PC-3 (cell line): ENCODE measurements at regions of chrX and their contacts with region 1.

Region 1: DNA sequence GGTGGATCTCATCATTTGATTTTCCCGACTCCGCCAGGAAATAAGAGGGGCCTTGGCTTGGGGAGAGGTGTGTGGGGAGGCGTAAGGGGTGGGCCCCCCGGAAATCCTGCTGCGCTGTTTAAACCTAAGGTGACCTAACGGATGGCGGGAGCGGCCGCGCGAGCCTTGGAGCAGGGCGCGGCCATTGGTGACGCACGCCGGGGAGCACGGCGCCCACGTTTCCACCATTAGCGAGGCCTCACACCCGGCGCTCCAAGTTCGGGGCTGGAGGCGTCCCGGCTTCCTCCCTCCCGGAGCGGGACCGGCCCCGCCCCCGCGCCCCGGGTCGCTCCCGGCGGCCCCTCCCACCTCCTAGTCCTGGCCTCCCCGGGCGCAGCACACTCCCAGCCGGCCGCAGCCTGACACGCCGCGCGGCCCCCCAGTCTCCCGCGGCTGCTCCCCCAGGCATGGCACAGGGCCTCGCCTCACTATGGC is at the start of gene SMS:
- DNase-seq: peak; percentile 81
- ATAC-seq: peak; percentile 73
- H3K4me3 ChIP-seq: peak within 1 kb of the TSS; percentile 87
- H3K27ac ChIP-seq: peak within 1 kb of the TSS; percentile 32; the same call in 1 of the 2 replicates
- H3K4me1 ChIP-seq: peaks cover 29% of the 10 kb centered on the region
- H3K27me3 ChIP-seq: no peaks in the 10 kb centered on the region
- CTCF ChIP-seq: no peak
- total RNA-seq, gene SMS: 158 and 164 TPM in 2 replicates

Region 2: GRCh38 chrX:21487832-21488231 is 452.6 kb before region 1 on chrX:
- CTCF ChIA-PET with region 1: no interaction called
- POLR2A ChIA-PET with region 1: no interaction called
- intact Hi-C with region 1: no loop called
- DNase-seq: peak; percentile 78
- ATAC-seq: peak; percentile 67
- H3K4me3 ChIP-seq: no peak overlapping the region
- H3K27ac ChIP-seq: no peak overlapping the region
- H3K4me1 ChIP-seq: peaks cover 22% of the 10 kb centered on the region
- H3K27me3 ChIP-seq: no peaks in the 10 kb centered on the region
- CTCF ChIP-seq: no peak

Region 3: DNA sequence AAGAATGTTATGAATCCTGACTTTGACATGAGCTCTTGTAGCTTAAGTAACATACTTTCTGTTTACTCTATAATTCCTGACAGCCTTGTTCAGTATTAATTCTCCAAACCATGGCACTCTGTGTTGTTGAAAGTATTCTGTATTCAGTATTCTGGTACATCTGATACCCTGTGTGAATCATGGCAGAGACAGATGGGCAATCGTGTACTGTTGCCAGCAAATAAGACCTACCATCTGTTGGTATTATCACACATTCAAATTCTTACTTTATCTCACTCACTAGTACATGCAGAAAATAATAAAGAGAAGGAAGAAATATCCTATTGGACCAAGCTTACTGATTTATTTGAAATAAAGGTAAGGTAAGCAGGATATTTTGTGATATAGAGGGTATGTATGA is 93.1 kb before region 1 on chrX:
- CTCF ChIA-PET with region 1: interaction called, 19 read pairs
- POLR2A ChIA-PET with region 1: no interaction called
- intact Hi-C with region 1: no loop called
- DNase-seq: no peak
- ATAC-seq: no peak
- H3K4me3 ChIP-seq: no peak overlapping the region
- H3K27ac ChIP-seq: no peak overlapping the region
- H3K4me1 ChIP-seq: no peaks in the 10 kb centered on the region
- H3K27me3 ChIP-seq: no peaks in the 10 kb centered on the region
- CTCF ChIP-seq: no peak

Region 4: DNA sequence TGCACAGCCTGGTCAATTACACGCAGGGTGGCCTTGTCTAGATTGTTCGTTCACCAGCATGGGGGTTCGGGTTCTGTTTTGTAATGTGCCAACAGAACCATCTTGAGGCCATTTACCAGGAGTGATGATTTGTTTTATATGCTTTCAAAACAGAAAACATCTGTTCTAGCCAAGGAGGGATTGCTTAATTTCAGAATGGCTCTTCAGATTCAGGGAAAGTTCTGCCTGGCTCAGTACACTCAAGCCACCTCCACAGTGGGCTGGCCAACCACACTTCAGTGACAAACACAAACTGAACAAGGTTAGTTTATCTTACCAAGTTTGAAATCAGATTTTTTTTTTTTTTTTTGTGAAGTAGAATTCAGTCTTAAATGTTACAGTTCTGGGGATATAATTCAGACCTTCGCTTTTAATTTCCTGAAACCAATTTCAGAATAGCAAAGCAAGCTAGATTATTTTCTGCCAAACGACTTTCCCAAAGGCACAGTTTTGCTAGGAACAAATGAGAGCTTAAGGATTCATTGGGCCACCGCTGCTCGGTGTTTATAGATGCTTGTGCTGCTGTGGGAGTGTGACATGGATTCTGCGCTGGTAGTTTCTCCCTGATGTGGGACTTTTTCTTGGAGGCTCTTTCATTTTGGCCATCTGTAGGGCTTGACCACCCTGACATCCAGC is 23.5 kb after region 1 on chrX:
- CTCF ChIA-PET with region 1: no interaction called
- POLR2A ChIA-PET with region 1: no interaction called
- intact Hi-C with region 1: loop called (anchors 2 kb)
- DNase-seq: no peak
- ATAC-seq: no peak
- H3K4me3 ChIP-seq: no peak overlapping the region
- H3K27ac ChIP-seq: no peak overlapping the region
- H3K4me1 ChIP-seq: peaks cover 19% of the 10 kb centered on the region; the same call in 1 of the 2 replicates
- H3K27me3 ChIP-seq: no peaks in the 10 kb centered on the region
- CTCF ChIP-seq: no peak